Naive thymus-derived CD4-positive, alpha-beta T cell (primary cell): ENCODE measurements at regions of chr6 and their contacts with region 1.

Region 1: DNA sequence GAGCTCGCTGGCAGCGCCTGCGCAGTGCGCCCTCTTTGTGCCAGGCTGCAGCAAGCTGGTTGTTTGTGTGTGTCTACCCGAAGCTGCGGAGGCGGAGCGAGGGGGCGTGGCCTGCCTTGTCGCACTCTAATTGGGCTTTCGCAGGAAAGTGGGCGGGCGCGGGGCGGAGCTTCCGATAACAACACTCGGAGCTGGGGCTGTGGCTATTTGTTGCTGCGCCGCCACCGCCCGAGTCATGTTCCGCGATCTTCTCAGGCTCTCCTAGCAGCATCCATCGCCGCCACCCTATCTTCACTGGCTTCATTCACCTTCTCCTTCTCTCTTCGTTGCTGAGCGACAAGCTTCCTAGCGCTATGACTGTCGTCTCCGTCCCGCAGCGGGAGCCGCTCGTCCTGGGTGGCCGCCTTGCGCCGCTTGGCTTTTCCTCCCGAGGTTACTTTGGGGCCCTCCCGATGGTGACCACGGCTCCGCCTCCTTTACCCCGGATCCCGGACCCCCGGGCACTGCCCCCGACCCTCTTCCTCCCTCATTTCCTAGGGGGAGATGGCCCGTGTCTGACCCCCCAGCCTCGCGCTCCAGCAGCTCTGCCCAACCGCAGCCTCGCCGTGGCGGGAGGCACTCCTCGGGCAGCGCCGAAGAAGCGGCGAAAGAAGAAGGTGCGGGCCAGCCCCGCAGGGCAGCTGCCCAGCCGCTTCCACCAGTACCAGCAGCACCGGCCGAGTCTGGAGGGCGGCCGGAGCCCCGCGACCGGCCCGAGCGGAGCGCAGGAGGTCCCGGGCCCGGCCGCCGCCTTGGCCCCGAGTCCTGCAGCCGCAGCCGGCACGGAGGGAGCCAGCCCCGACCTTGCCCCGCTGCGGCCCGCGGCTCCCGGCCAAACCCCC is at the start of gene PNRC1:
- DNase-seq: peak; percentile 99 to 100 (median 100)
- ATAC-seq: peak; percentile 86
- H3K4me3 ChIP-seq: peak within 1 kb of the TSS; percentile 96
- H3K4me3 Mint-ChIP-seq: peak within 1 kb of the TSS; percentile 91 to 99 (median 98)
- H3K27ac ChIP-seq: peak within 1 kb of the TSS; percentile 100
- H3K27ac Mint-ChIP-seq: peak within 1 kb of the TSS; percentile 92 to 99 (median 98)
- H3K4me1 ChIP-seq: peaks cover 27 to 33% of the 10 kb centered on the region in 2 donors
- H3K4me1 Mint-ChIP-seq: peaks cover 31 to 54% (median 42%) of the 10 kb centered on the region in 7 donors
- H3K27me3 ChIP-seq: no peaks in the 10 kb centered on the region
- H3K27me3 Mint-ChIP-seq: peaks cover 0 to 4% (median 0%) of the 10 kb centered on the region in 5 donors
- total RNA-seq, gene PNRC1: 108 to 822 (median 763) TPM

Region 2: DNA sequence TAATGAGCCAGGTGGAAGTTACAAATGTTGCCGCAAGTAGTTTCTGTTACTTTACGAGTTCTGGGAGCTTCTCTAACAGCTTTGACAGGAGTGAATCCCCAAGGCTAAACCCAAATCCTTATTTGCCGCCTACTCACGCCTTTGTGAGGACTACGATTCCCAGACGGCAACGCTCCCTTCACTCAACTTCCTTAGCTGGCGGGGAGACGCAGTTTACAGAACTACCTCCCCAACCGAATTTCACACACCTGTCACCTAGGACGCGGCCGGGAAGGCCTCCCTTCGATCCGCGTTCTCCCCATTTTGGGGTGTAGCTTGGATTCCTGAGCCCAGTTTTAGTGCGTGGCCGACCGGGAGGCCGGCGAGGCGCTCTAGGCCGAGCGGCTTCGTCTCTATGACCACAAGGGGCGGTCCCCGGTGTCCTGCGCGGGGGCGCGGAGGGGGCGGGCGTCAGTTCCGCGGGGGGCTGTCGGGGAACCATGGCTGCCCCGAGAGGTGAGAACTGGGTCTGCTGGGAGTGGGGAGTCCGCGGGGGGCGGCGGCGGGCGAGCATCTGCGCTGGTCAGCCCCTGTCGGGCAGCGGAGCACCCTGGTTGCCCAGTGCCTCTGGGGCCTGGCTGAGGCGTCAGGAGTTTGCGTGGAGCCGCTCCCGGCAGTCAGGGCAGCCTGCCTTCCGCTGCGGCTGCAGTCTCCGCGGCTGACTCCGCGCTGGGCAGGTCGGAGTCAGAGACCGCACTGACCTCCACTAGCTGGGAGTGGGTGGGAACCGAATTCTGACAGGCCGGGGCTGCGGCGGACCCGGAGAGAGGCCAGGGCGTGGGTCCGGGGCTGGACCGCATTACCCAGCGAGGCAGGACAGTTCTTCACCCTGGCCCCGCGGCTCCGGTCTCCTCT is 1608.0 kb before region 1 on chr6 and contains the start of gene SLC35A1:
- CTCF ChIA-PET with region 1: no interaction called
- POLR2A ChIA-PET with region 1: no interaction called
- intact Hi-C with region 1: loop called in 1 of 2 experiments (anchors 2 kb)
- DNase-seq: peak; percentile 78 to 92 (median 87)
- ATAC-seq: peak; percentile 97
- H3K4me3 ChIP-seq: peak within 1 kb of the TSS; percentile 81
- H3K4me3 Mint-ChIP-seq: peak within 1 kb of the TSS; percentile 88 to 99 (median 98)
- H3K27ac ChIP-seq: peak within 1 kb of the TSS; percentile 93
- H3K27ac Mint-ChIP-seq: peak within 1 kb of the TSS; percentile 95 to 100 (median 99)
- H3K4me1 ChIP-seq: peaks cover 9 to 11% of the 10 kb centered on the region in 2 donors
- H3K4me1 Mint-ChIP-seq: peaks cover 14 to 31% (median 20%) of the 10 kb centered on the region in 7 donors
- H3K27me3 ChIP-seq: no peaks in the 10 kb centered on the region
- H3K27me3 Mint-ChIP-seq: peaks cover 2 to 14% (median 9%) of the 10 kb centered on the region in 5 donors
- total RNA-seq, gene SLC35A1: 10.4 to 23.4 (median 15.6) TPM

Region 3: DNA sequence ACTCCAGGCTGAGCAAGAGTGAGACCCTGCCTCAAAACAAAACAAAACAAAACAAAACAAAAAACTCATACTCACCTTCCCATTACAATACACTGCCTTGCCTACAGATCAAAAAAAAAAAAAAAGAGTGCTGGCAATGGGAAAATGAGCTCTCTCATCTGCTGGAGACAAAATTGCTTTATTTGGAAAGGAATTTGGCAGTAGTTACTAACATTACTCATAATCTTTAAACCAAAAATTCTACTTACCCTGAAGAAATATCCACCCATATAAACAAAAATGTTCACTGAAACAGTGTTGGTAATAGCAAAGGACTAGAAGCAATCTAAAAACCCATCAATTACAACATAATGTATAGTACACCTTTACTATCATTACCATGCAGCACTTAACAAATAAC is 237.7 kb before region 1 on chr6:
- CTCF ChIA-PET with region 1: no interaction called
- POLR2A ChIA-PET with region 1: no interaction called
- intact Hi-C with region 1: no loop called
- DNase-seq: no peak
- ATAC-seq: no peak
- H3K4me3 ChIP-seq: no peak overlapping the region
- H3K4me3 Mint-ChIP-seq: no peak overlapping the region
- H3K27ac ChIP-seq: no peak overlapping the region
- H3K27ac Mint-ChIP-seq: peak overlapping the region in 2 of 9 donors; percentile 44 to 47
- H3K4me1 ChIP-seq: no peaks in the 10 kb centered on the region
- H3K4me1 Mint-ChIP-seq: peaks cover 0 to 6% (median 0%) of the 10 kb centered on the region in 7 donors
- H3K27me3 ChIP-seq: no peaks in the 10 kb centered on the region
- H3K27me3 Mint-ChIP-seq: no peaks in the 10 kb centered on the region

Region 4: GRCh38 chr6:89007209-89008000 is 73.4 kb before region 1 on chr6:
- CTCF ChIA-PET with region 1: interaction called, 11 read pairs
- POLR2A ChIA-PET with region 1: interaction called, 6 read pairs
- intact Hi-C with region 1: no loop called
- DNase-seq: peak in 2 of 9 donors; percentile 9 to 19
- ATAC-seq: no peak
- H3K4me3 ChIP-seq: no peak overlapping the region
- H3K4me3 Mint-ChIP-seq: peak overlapping the region in 6 of 10 donors; percentile 7 to 57 (median 42)
- H3K27ac ChIP-seq: no peak overlapping the region
- H3K27ac Mint-ChIP-seq: peak overlapping the region in 1 of 9 donors; percentile 61
- H3K4me1 ChIP-seq: no peaks in the 10 kb centered on the region
- H3K4me1 Mint-ChIP-seq: peaks cover 4 to 17% (median 14%) of the 10 kb centered on the region in 7 donors
- H3K27me3 ChIP-seq: no peaks in the 10 kb centered on the region
- H3K27me3 Mint-ChIP-seq: peaks cover 0 to 8% (median 0%) of the 10 kb centered on the region in 5 donors

Region 5: GRCh38 chr6:89117211-89118108 is 36.7 kb after region 1 on chr6 and contains the start of gene SRSF12:
- CTCF ChIA-PET with region 1: no interaction called
- POLR2A ChIA-PET with region 1: interaction called, 4 read pairs
- intact Hi-C with region 1: loop called (anchors 1 kb)
- DNase-seq: peak; percentile 5 to 43 (median 30)
- ATAC-seq: peak; percentile 91
- H3K4me3 ChIP-seq: peak within 1 kb of the TSS; percentile 42
- H3K4me3 Mint-ChIP-seq: peak within 1 kb of the TSS; percentile 77 to 95 (median 85)
- H3K27ac ChIP-seq: no peak within 1 kb of the TSS
- H3K27ac Mint-ChIP-seq: peak within 1 kb of the TSS in 5 of 9 donors; percentile 1 to 82 (median 39)
- H3K4me1 ChIP-seq: peaks cover 0 to 5% of the 10 kb centered on the region in 2 donors
- H3K4me1 Mint-ChIP-seq: peaks cover 6 to 12% (median 10%) of the 10 kb centered on the region in 7 donors
- H3K27me3 ChIP-seq: no peaks in the 10 kb centered on the region
- H3K27me3 Mint-ChIP-seq: peaks cover 0 to 44% (median 0%) of the 10 kb centered on the region in 5 donors
- total RNA-seq, gene SRSF12: 0.56 TPM in 1 of 5 experiments, not detected in the others

Region 6: GRCh38 chr6:89360415-89360999 is 279.7 kb after region 1 on chr6:
- CTCF ChIA-PET with region 1: interaction called, 4 read pairs
- POLR2A ChIA-PET with region 1: interaction called, 24 read pairs
- intact Hi-C with region 1: no loop called
- DNase-seq: no peak
- ATAC-seq: peak; percentile 48
- H3K4me3 ChIP-seq: no peak overlapping the region
- H3K4me3 Mint-ChIP-seq: peak overlapping the region in 2 of 10 donors; percentile 5 to 10
- H3K27ac ChIP-seq: no peak overlapping the region
- H3K27ac Mint-ChIP-seq: peak overlapping the region in 6 of 9 donors; percentile 4 to 35 (median 15)
- H3K4me1 ChIP-seq: peaks cover 12 to 26% of the 10 kb centered on the region in 2 donors
- H3K4me1 Mint-ChIP-seq: peaks cover 22 to 68% (median 56%) of the 10 kb centered on the region in 7 donors
- H3K27me3 ChIP-seq: no peaks in the 10 kb centered on the region
- H3K27me3 Mint-ChIP-seq: no peaks in the 10 kb centered on the region

Region 7: GRCh38 chr6:89829591-89830385 is 749.0 kb after region 1 on chr6 and contains the start of gene CASP8AP2:
- CTCF ChIA-PET with region 1: no interaction called
- POLR2A ChIA-PET with region 1: interaction called, 3 read pairs
- intact Hi-C with region 1: loop called (anchors 1 kb)
- DNase-seq: peak; percentile 71 to 98 (median 96)
- ATAC-seq: peak; percentile 97
- H3K4me3 ChIP-seq: peak within 1 kb of the TSS; percentile 96
- H3K4me3 Mint-ChIP-seq: peak within 1 kb of the TSS; percentile 92 to 100 (median 99)
- H3K27ac ChIP-seq: peak within 1 kb of the TSS; percentile 83
- H3K27ac Mint-ChIP-seq: peak within 1 kb of the TSS; percentile 84 to 97 (median 95)
- H3K4me1 ChIP-seq: peaks cover 11 to 14% of the 10 kb centered on the region in 2 donors
- H3K4me1 Mint-ChIP-seq: peaks cover 11 to 47% (median 33%) of the 10 kb centered on the region in 7 donors
- H3K27me3 ChIP-seq: no peaks in the 10 kb centered on the region
- H3K27me3 Mint-ChIP-seq: no peaks in the 10 kb centered on the region
- total RNA-seq, gene CASP8AP2: 21.2 to 44.8 (median 34.5) TPM

Region 8: DNA sequence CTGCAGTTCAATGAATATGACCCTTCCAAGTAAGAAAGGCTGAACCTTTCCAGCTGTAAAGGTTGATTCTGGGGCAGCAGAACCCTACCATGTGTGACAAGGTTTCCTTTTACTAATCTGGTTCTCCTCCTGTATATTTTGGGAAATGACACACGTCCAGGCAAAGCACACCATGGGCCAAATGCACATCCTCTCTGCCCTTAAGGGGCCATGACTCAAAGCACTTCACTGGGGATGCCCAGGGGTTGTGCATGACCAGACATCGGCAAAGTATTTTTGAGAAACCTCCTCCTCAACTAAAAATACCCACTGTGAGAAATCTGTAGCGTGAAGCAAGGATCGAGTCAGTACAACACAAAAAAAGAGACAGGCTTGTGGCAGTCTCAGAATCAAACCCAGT is 1041.2 kb after region 1 on chr6:
- CTCF ChIA-PET with region 1: no interaction called
- POLR2A ChIA-PET with region 1: no interaction called
- intact Hi-C with region 1: no loop called
- DNase-seq: no peak
- ATAC-seq: peak; percentile 14
- H3K4me3 ChIP-seq: no peak overlapping the region
- H3K4me3 Mint-ChIP-seq: peak overlapping the region in 7 of 10 donors; percentile 15 to 70 (median 49)
- H3K27ac ChIP-seq: no peak overlapping the region
- H3K27ac Mint-ChIP-seq: peak overlapping the region in 8 of 9 donors; percentile 21 to 92 (median 85)
- H3K4me1 ChIP-seq: peaks cover 0 to 16% of the 10 kb centered on the region in 2 donors
- H3K4me1 Mint-ChIP-seq: peaks cover 17 to 91% (median 86%) of the 10 kb centered on the region in 7 donors
- H3K27me3 ChIP-seq: no peaks in the 10 kb centered on the region
- H3K27me3 Mint-ChIP-seq: no peaks in the 10 kb centered on the region